Activated CD4-positive, alpha-beta T cell treated with anti-CD3 and anti-CD28 coated beads for 36 hours (primary cell): ENCODE measurements at regions of chr6 and their contacts with region 1.

Region 1: GRCh38 chr6:44246663-44247337 is at the start of gene HSP90AB1:
- DNase-seq: peak; percentile 98
- ATAC-seq: peak; percentile 86
- H3K4me3 Mint-ChIP-seq: peak within 1 kb of the TSS; percentile 97
- H3K27ac Mint-ChIP-seq: peak within 1 kb of the TSS; percentile 99
- H3K4me1 Mint-ChIP-seq: peaks cover 44% of the 10 kb centered on the region
- H3K27me3 Mint-ChIP-seq: no peaks in the 10 kb centered on the region
- total RNA-seq, gene HSP90AB1: 2,120 to 2,263 TPM

Region 2: GRCh38 chr6:43575772-43576551 is 670.8 kb before region 1 on chr6 and contains the starts of genes POLH and XPO5:
- CTCF ChIA-PET with region 1: no interaction called
- POLR2A ChIA-PET with region 1: no interaction called
- intact Hi-C with region 1: loop called in 1 of 2 experiments (anchors 5 kb)
- DNase-seq: peak; percentile 95
- ATAC-seq: peak; percentile 91
- H3K4me3 Mint-ChIP-seq: peak within 1 kb of the TSS; percentile 90
- H3K27ac Mint-ChIP-seq: peak within 1 kb of the TSS; percentile 86
- H3K4me1 Mint-ChIP-seq: peaks cover 44% of the 10 kb centered on the region
- H3K27me3 Mint-ChIP-seq: no peaks in the 10 kb centered on the region
- total RNA-seq, gene POLH: 35.2 to 37.9 TPM
- total RNA-seq, gene XPO5: 108 to 109 TPM

Region 3: DNA sequence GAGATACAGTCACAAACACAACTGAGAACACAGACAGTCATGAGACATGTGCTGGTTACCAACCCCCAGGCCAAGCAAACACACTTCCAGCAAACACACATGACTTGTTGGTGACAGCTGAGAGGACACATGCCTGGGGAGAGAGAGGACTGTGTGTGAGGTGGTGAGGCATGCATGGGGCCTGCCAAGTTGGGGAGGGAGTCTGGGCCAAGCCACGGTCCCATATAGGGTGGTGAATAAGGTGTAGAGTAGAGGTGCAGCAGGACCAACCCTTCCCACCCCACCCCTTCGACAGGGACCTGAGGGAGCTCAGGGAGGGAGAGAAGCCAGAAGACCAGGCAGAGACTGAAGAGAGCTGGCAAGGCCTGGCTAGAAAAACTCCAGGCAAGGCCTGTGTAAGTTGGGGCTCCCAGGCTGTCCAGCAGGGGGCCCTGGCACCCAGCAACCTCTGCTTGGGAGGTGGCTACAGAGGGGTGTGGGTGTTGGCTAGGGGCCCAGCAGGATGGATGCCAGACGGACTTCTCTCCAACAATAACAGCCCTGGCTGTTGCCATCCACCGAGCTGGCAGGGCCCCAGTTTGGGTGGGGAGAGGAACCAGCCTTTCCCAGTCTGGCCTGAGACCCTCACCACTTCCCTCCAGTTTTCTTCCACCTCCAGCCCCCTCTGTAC is 25.4 kb before region 1 on chr6:
- CTCF ChIA-PET with region 1: interaction called, 10 read pairs
- POLR2A ChIA-PET with region 1: interaction called, 55 read pairs
- intact Hi-C with region 1: loop called (anchors 1 to 2 kb)
- DNase-seq: peak; percentile 90
- ATAC-seq: peak; percentile 70
- H3K4me3 Mint-ChIP-seq: peak overlapping the region; percentile 10
- H3K27ac Mint-ChIP-seq: peak overlapping the region; percentile 69
- H3K4me1 Mint-ChIP-seq: peaks cover 48% of the 10 kb centered on the region
- H3K27me3 Mint-ChIP-seq: peaks cover 3% of the 10 kb centered on the region

Region 4: DNA sequence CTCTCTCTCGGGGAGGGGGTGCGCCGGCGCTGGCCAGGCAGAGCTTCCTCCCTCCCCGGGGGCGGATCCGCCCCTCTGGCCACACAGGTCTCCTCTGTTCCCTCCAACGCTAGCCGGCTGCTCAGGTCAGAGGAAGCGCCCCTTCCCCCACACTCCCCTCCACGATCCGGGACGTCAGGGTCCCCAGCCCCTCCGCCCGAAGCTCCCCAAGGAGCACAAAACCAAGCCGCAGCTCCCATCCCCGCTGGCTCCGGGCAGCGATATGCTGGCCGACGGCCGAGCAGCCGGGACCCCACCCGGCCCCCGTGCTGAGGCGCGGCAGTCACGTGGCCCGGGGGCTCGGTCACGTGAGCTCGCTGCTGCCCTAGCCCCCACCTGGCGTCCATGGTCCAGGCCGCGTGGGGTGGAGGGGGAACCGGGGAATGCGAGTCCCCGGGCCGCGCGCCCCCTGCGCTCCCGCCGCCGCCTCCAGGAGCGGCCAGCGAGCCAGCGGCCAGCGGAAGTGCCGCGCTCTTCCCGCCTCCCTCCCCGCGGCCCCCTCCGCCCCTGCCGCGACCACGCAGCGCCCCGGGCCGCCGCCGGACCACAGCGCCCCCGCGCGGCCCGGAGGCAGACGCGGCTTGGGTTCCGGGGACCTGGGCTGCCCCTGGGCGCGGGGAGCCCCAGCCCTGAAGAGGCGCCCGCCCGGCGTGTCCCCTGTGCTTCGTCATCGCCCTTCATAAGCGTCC is 10.4 kb after region 1 on chr6 and contains the start of gene SLC35B2:
- CTCF ChIA-PET with region 1: interaction called, 40 read pairs
- POLR2A ChIA-PET with region 1: interaction called, 70 read pairs
- intact Hi-C with region 1: loop called (anchors 1 kb)
- DNase-seq: peak; percentile 81
- ATAC-seq: peak; percentile 72
- H3K4me3 Mint-ChIP-seq: peak within 1 kb of the TSS; percentile 83
- H3K27ac Mint-ChIP-seq: peak within 1 kb of the TSS; percentile 90
- H3K4me1 Mint-ChIP-seq: peaks cover 56% of the 10 kb centered on the region
- H3K27me3 Mint-ChIP-seq: no peaks in the 10 kb centered on the region
- total RNA-seq, gene SLC35B2: 14.1 TPM

Region 5: DNA sequence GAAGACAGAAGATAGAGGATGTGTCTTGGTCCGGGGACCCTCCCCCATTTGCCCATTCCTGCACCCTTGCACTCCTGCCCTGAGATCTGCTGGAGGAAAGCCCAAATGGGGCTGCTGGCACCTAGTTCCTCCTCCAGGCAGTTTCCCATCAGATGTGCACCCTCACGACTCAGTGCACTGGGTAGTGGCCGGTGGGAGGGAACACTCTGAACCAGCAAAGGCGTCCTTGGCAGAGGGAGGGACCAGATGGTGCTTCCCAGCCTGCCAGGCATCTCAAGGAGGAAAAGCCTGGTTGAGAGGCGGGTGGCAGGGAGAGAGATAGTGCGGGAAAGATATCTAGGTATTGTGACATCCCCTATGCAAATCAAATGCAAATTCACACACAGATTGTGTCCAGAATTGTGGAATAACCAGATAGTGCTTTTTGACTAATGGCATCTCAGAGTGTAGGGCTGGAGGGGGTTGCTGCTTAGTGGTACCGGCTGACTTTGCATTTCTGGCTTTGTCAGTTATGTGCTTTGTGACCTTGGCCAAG is 43.0 kb after region 1 on chr6:
- CTCF ChIA-PET with region 1: no interaction called
- POLR2A ChIA-PET with region 1: no interaction called
- intact Hi-C with region 1: no loop called
- DNase-seq: no peak
- ATAC-seq: no peak
- H3K4me3 Mint-ChIP-seq: no peak overlapping the region
- H3K27ac Mint-ChIP-seq: no peak overlapping the region
- H3K4me1 Mint-ChIP-seq: no peaks in the 10 kb centered on the region
- H3K27me3 Mint-ChIP-seq: peaks cover 54% of the 10 kb centered on the region